ENCODE measurements at regions of chr16 and their contacts with region 1.

Region 1: GRCh38 chr16:48353565-48354163 is 31.5 kb downstream of the SIAH1 start:
- DNase-seq: peak; percentile 74
- CTCF ChIP-seq: peak; percentile 69

Region 2: GRCh38 chr16:48194828-48195556 is 158.7 kb before region 1 on chr16:
- in situ Hi-C with region 1: no loop called
- DNase-seq: no peak
- CTCF ChIP-seq: no peak

Region 3: GRCh38 chr16:48252013-48252412 is 101.7 kb before region 1 on chr16:
- in situ Hi-C with region 1: no loop called
- DNase-seq: no peak
- CTCF ChIP-seq: no peak

Region 4: DNA sequence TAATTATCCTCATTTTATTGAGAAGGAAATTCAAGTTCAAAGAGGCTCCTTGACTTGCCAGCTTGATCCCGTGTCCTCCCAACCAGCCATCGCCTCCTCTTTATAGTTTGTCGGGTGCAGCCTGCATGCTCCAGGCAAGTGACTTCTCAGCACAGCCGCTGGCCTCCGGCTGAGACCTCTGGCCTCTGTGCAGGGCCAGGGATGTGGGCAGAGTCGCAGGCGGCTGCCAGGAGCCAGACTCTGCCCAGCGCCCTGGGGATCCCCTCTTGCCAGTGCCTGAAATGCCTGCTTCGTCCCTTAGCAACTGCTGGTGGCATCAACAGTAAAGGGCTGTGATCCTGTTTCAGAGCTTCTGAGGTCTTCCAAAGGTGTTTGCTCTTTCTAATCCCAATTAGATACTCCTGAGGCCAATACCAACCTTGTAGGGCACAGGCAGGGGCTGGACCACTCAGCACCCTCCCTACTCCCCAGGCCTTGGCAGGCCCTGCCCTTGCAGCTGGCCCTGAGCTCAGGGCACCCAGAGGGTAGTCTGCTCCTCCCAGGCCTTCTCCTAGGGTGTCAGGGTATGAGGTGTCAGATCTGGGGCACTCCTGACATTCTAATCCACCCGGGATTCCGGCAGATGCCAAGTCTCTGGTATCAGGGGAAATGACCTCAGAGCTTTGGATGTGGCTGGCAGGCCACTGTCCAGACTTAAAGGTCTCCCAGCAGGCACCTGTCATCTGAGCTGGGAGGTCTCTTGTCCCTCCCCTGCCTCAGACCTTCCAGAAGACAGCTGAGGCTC is 99.5 kb after region 1 on chr16:
- in situ Hi-C with region 1: loop called (anchors 25 kb)
- DNase-seq: no peak
- CTCF ChIP-seq: no peak

Region 5: GRCh38 chr16:48526058-48526957 is 172.6 kb after region 1 on chr16:
- in situ Hi-C with region 1: loop called (anchors 10 kb)
- DNase-seq: peak; percentile 79
- CTCF ChIP-seq: peak; percentile 45

Region 6: DNA sequence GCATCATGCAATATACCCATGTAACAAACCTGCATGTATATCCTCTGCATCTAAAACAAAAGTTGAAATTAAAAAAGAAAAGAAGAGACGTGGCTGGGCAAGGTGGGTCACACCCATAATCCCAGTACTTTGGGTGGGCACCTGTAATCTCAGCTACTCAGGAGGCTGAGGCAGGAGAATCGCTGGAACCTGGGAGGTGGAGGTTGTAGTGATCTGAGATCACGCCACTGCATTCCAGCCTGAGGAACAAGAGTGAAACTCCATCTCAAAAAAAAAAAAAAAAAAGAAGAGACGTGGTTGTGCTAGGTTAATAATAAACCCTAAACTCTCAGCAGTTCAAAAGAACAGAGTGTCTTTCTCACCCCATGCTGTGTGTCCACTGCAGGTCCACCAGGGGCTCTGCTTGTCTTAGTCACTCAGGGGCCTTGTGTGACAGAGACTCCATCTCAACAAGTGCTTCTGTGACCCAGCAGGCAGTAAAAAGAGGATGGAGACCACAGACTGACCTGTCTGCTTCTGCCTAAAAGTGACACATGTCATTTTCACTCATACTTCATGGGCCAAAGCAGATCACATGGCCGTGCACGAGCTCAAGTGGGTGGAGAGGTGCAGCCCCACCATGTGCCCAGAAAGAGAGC is 278.6 kb after region 1 on chr16:
- in situ Hi-C with region 1: loop called (anchors 5 kb)
- DNase-seq: no peak
- CTCF ChIP-seq: no peak